SK-N-SH (cell line): ENCODE measurements at regions of chr1 and their contacts with region 1.

Region 1: DNA sequence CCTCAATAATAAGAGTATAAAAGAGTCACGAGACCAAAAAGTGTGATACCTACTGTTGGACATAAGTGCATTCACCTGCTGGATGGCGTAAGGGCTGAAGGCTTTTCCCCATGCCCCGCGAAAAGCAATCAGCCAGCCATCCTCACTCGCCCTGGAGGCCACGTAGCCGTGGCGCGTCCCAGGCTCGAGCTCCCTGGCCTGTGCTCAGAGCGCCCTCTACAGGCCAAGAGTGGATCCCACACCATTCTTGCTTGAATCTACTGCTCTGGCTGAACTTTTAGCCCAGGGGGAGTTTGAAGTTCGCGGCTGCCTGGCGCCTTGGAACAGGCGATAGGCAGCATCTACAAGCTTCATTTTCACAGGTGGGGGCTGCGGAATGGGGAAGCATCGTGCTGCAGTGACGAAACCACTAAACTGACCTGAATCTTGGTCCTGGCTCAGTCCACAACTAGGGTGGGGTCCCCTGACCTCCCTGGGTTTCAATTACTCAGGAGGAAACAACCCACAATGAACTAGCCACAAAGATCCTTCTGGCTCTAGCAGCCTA is 70.3 kb upstream of the SERBP1 start:
- DNase-seq: peak; percentile 88
- H3K4me3 ChIP-seq: peak overlapping the region in 1 of 2 experiments; percentile 55; a peak in 1 of 4 replicates
- H3K27ac ChIP-seq: no peak overlapping the region
- H3K4me1 ChIP-seq: peaks cover 0 to 3% of the 10 kb centered on the region in 2 experiments; a peak in 1 of 4 replicates
- H3K27me3 ChIP-seq: no peaks in the 10 kb centered on the region; the same call in 1 of the 2 replicates
- CTCF ChIP-seq: peak; percentile 94
- EP300 ChIP-seq: no peak
- RAD21 ChIP-seq: peak; percentile 100

Region 2: GRCh38 chr1:67227196-67227595 is 273.3 kb before region 1 on chr1:
- CTCF ChIA-PET with region 1: interaction called, 14 read pairs
- POLR2A ChIA-PET with region 1: no interaction called
- DNase-seq: no peak
- H3K4me3 ChIP-seq: no peak overlapping the region
- H3K27ac ChIP-seq: no peak overlapping the region
- H3K4me1 ChIP-seq: no peaks in the 10 kb centered on the region
- H3K27me3 ChIP-seq: no peaks in the 10 kb centered on the region
- CTCF ChIP-seq: no peak
- EP300 ChIP-seq: no peak
- RAD21 ChIP-seq: no peak

Region 3: GRCh38 chr1:67332653-67333529 is 167.6 kb before region 1 on chr1:
- CTCF ChIA-PET with region 1: interaction called, 10 read pairs
- POLR2A ChIA-PET with region 1: no interaction called
- DNase-seq: no peak
- H3K4me3 ChIP-seq: no peak overlapping the region
- H3K27ac ChIP-seq: no peak overlapping the region
- H3K4me1 ChIP-seq: no peaks in the 10 kb centered on the region
- H3K27me3 ChIP-seq: no peaks in the 10 kb centered on the region
- CTCF ChIP-seq: no peak
- EP300 ChIP-seq: no peak
- RAD21 ChIP-seq: no peak

Region 4: GRCh38 chr1:67430352-67431155 is 69.9 kb before region 1 on chr1 and contains the start of gene SERBP1:
- CTCF ChIA-PET with region 1: interaction called, 15 read pairs
- POLR2A ChIA-PET with region 1: no interaction called
- DNase-seq: peak; percentile 94
- H3K4me3 ChIP-seq: peak within 1 kb of the TSS; percentile 96 to 97
- H3K27ac ChIP-seq: peak within 1 kb of the TSS; percentile 80 to 97
- H3K4me1 ChIP-seq: peaks cover 0 to 23% of the 10 kb centered on the region in 2 experiments; a peak in 3 of 4 replicates
- H3K27me3 ChIP-seq: no peaks in the 10 kb centered on the region
- CTCF ChIP-seq: no peak
- EP300 ChIP-seq: no peak
- RAD21 ChIP-seq: no peak
- polyA plus RNA-seq, gene SERBP1: 177 and 194 TPM in 2 replicates

Region 5: GRCh38 chr1:67463298-67463955 is 37.1 kb before region 1 on chr1:
- CTCF ChIA-PET with region 1: interaction called, 14 read pairs
- POLR2A ChIA-PET with region 1: no interaction called
- DNase-seq: no peak
- H3K4me3 ChIP-seq: no peak overlapping the region
- H3K27ac ChIP-seq: no peak overlapping the region
- H3K4me1 ChIP-seq: peaks cover 3 to 6% of the 10 kb centered on the region in 2 experiments; a peak in 3 of 4 replicates
- H3K27me3 ChIP-seq: no peaks in the 10 kb centered on the region
- CTCF ChIP-seq: no peak
- EP300 ChIP-seq: no peak
- RAD21 ChIP-seq: no peak

Region 6: GRCh38 chr1:67515324-67516080 is 15.0 kb after region 1 on chr1:
- CTCF ChIA-PET with region 1: interaction called, 21 read pairs
- POLR2A ChIA-PET with region 1: no interaction called
- DNase-seq: no peak
- H3K4me3 ChIP-seq: no peak overlapping the region
- H3K27ac ChIP-seq: no peak overlapping the region
- H3K4me1 ChIP-seq: no peaks in the 10 kb centered on the region
- H3K27me3 ChIP-seq: no peaks in the 10 kb centered on the region
- CTCF ChIP-seq: no peak
- EP300 ChIP-seq: no peak
- RAD21 ChIP-seq: no peak

Region 7: DNA sequence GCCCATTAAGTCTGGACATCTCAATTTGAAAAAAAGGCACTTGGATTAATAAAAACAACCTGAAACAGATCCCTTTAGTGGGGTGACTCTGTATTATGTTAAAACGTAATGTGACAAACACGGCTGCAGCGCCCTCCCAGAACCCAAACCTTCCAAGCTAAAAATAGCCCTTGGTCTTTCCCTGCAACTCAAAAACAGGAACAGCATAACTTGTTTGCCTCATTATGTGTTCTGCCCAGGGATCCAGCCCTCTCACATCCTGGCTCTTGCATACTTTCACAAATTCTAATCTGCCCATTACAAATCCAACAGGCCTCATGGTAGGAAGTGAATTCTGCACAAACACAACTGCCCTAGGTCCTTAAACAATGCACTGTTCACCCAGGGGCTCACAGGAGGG is 89.8 kb after region 1 on chr1:
- CTCF ChIA-PET with region 1: no interaction called
- POLR2A ChIA-PET with region 1: no interaction called
- DNase-seq: no peak
- H3K4me3 ChIP-seq: no peak overlapping the region
- H3K27ac ChIP-seq: peak overlapping the region in 1 of 2 experiments; percentile 77; a peak in 2 of 4 replicates
- H3K4me1 ChIP-seq: peaks cover 0 to 22% of the 10 kb centered on the region in 2 experiments; a peak in 2 of 4 replicates
- H3K27me3 ChIP-seq: no peaks in the 10 kb centered on the region
- CTCF ChIP-seq: no peak
- EP300 ChIP-seq: no peak
- RAD21 ChIP-seq: no peak

Region 8: GRCh38 chr1:67612788-67613241 is 112.3 kb after region 1 on chr1:
- CTCF ChIA-PET with region 1: no interaction called
- POLR2A ChIA-PET with region 1: no interaction called
- DNase-seq: no peak
- H3K4me3 ChIP-seq: no peak overlapping the region
- H3K27ac ChIP-seq: no peak overlapping the region
- H3K4me1 ChIP-seq: peaks cover 0 to 31% of the 10 kb centered on the region in 2 experiments; a peak in 3 of 4 replicates
- H3K27me3 ChIP-seq: no peaks in the 10 kb centered on the region
- CTCF ChIP-seq: no peak
- EP300 ChIP-seq: no peak
- RAD21 ChIP-seq: no peak

Region 9: GRCh38 chr1:67645495-67646144 is 145.1 kb after region 1 on chr1:
- CTCF ChIA-PET with region 1: no interaction called
- POLR2A ChIA-PET with region 1: no interaction called
- DNase-seq: no peak
- H3K4me3 ChIP-seq: no peak overlapping the region
- H3K27ac ChIP-seq: peak overlapping the region; percentile 56 to 97
- H3K4me1 ChIP-seq: peaks cover 18 to 39% of the 10 kb centered on the region in 2 experiments
- H3K27me3 ChIP-seq: no peaks in the 10 kb centered on the region
- CTCF ChIP-seq: no peak
- EP300 ChIP-seq: no peak
- RAD21 ChIP-seq: no peak